ENCODE measurements at regions of chr5 and their contacts with region 1.

Region 1: DNA sequence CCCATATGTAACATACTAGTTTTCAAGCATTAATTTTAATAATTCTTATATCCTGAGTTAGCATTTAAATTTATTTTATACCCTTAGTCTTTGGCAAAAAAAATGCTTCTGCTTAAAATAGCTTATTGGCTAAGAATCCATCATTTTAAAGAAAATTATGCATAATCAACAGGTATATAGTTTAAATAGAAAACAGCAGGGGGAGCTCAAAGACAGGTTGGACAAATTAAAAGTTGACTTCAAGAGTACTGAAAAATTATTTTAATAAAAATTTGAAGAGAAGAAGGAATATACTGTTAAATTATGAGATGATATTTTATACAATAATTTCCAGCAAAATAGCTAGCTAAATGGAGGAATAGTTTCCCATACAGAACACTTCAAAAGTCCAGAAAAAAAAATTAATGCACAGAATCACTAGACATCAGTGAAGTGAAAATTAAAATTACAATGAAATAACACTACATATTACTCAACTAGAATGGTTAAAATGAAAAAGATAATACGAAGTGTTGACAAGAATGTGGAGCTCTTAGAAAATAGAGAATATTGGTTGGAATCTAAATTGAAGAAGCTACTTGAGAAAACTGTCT is 387.1 kb downstream of the PDE4D start:
- DNase-seq: no peak
- H3K4me3 ChIP-seq: no peak overlapping the region
- H3K27ac ChIP-seq: no peak overlapping the region
- H3K4me1 ChIP-seq: no peaks in the 10 kb centered on the region
- H3K27me3 ChIP-seq: no peaks in the 10 kb centered on the region
- CTCF ChIP-seq: peak in 2 of 3 experiments; percentile 22 to 50
- POLR2A ChIP-seq: no peak

Region 2: GRCh38 chr5:59430066-59430685 is 76.2 kb before region 1 on chr5:
- intact Hi-C with region 1: no loop called
- DNase-seq: no peak
- H3K4me3 ChIP-seq: no peak overlapping the region
- H3K27ac ChIP-seq: no peak overlapping the region
- H3K4me1 ChIP-seq: no peaks in the 10 kb centered on the region
- H3K27me3 ChIP-seq: no peaks in the 10 kb centered on the region
- CTCF ChIP-seq: no peak
- POLR2A ChIP-seq: no peak

Region 3: DNA sequence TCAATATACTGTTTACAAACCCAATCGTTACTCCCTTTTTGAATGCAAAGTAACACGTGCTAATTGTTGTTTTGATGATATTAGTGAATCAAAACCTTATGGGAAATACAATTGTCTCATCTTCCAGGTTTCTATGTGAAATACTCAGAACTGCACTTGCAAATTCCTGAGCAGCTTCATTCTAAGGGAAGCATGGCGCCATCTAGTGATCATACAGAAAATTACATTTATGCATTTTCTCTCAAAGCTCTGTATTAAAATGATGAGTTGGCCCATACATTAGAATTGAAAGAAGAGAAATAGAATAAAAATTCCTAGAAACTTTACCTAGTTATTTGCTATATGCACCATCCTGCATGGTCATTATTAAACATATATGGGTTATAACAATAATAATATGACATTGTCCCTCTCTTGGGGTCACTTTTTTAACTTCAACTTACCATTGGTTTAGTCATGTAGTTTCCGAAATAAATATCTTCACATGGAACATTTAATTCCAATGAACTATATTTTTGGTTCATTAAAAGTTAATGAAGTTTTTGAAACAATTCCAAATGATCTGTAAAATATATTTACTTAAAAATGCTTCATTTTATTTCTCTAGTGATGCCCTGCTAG is 167.2 kb after region 1 on chr5:
- intact Hi-C with region 1: loop called (anchors 10 kb)
- DNase-seq: no peak
- H3K4me3 ChIP-seq: no peak overlapping the region
- H3K27ac ChIP-seq: no peak overlapping the region
- H3K4me1 ChIP-seq: no peaks in the 10 kb centered on the region
- H3K27me3 ChIP-seq: no peaks in the 10 kb centered on the region
- CTCF ChIP-seq: peak; percentile 65 to 88 (median 72)
- POLR2A ChIP-seq: no peak

Measured in testis (tissue), 5 donors.